Activated CD4-positive, alpha-beta T cell treated with anti-CD3 and anti-CD28 coated beads, Interleukin-2, amount 10 ng/mL, durations not matched to agents 24 days and 14 days (primary cell): ENCODE measurements at regions of chr17 and their contacts with region 1.

Region 1: DNA sequence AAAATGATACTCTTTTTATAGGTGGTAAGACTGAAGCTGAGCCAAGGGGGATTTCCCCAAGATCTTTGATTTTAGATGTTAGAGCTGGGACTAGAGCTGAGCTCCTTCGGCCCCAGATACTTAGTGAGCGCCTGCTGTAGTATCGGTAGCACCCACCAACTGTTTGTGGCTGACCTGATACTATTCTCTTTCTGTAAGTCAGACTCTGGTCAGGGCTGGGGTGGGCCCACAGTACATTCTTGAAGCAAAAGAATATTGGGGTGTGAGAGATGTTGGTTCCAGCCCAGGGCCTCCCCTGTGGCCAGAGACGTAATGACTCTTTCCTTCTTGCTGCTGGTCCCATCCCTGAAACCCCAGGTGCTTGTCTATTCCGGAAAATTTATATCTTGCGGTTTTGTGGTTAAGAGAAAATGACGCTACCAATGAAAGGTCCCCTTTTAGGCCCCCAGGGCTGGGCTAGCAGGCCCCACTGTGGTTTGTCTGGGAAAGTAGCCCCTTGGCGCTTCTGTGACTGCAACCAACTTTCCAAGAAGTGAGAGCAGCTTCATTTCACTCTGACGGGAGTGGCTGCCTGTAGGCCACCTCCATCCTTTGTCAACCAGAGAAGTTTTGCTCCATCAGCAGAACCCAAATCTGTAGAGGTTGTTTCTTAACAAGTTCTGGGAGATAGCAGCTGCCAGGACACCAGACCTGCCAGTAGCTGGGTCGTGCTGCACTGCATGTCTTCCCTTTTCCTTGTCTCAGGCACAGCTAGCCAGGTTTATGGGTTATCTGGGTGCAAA is 86.4 kb upstream of the LGALS9 start:
- DNase-seq: peak; percentile 91
- H3K4me3 Mint-ChIP-seq: peak overlapping the region; percentile 58
- H3K27ac Mint-ChIP-seq: peak overlapping the region; percentile 87
- H3K4me1 Mint-ChIP-seq: peaks cover 77% of the 10 kb centered on the region
- H3K27me3 Mint-ChIP-seq: peaks cover 3% of the 10 kb centered on the region

Region 2: GRCh38 chr17:27455914-27456680 is 88.4 kb before region 1 on chr17 and contains the start of gene KSR1:
- intact Hi-C with region 1: loop called (anchors 1 kb)
- DNase-seq: peak; percentile 95
- H3K4me3 Mint-ChIP-seq: peak within 1 kb of the TSS; percentile 98
- H3K27ac Mint-ChIP-seq: peak within 1 kb of the TSS; percentile 77
- H3K4me1 Mint-ChIP-seq: peaks cover 42% of the 10 kb centered on the region
- H3K27me3 Mint-ChIP-seq: no peaks in the 10 kb centered on the region
- total RNA-seq, gene KSR1: 104 TPM in 2 replicates

Region 3: GRCh38 chr17:27466743-27467375 is 77.7 kb before region 1 on chr17:
- intact Hi-C with region 1: loop called (anchors 1 kb)
- DNase-seq: peak; percentile 93
- H3K4me3 Mint-ChIP-seq: peak overlapping the region; percentile 83
- H3K27ac Mint-ChIP-seq: peak overlapping the region; percentile 97
- H3K4me1 Mint-ChIP-seq: peaks cover 82% of the 10 kb centered on the region
- H3K27me3 Mint-ChIP-seq: no peaks in the 10 kb centered on the region

Region 4: DNA sequence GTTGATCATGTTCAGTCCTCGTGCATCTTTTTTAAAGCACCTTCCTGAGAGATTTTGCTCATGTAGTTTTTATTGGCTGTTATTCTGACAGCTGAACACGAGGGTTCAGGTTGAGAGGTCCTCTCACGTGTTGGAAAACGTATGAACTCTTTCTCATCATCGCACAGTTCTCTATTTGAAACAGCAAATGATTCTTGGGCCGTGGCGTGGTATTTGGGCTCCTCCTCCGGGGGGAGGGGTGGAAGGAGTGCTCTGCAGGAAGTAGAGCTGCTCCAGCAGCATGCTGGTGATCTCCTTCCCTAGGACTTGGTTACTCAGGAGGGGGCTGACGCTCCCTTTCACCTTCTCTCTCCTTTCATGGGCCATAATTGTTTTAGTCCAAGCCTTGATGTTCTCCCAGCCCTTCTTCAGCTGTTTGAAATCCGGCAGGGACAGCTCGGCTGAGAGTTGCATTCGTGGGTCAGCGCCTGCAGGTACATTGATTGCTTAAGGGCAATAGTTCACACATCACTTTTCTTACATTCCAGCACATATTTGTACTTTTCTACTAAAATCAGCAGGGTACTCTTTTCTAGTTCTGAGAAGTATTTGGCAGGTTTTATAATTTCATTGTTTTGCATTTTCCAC is 17.8 kb before region 1 on chr17:
- intact Hi-C with region 1: loop called (anchors 1 kb)
- DNase-seq: peak; percentile 88
- H3K4me3 Mint-ChIP-seq: peak overlapping the region; percentile 76
- H3K27ac Mint-ChIP-seq: peak overlapping the region; percentile 89
- H3K4me1 Mint-ChIP-seq: peaks cover 82% of the 10 kb centered on the region
- H3K27me3 Mint-ChIP-seq: no peaks in the 10 kb centered on the region

Region 5: GRCh38 chr17:27569257-27569722 is 24.7 kb after region 1 on chr17:
- intact Hi-C with region 1: loop called (anchors 1 kb)
- DNase-seq: peak; percentile 81
- H3K4me3 Mint-ChIP-seq: no peak overlapping the region
- H3K27ac Mint-ChIP-seq: peak overlapping the region; percentile 48
- H3K4me1 Mint-ChIP-seq: peaks cover 69% of the 10 kb centered on the region
- H3K27me3 Mint-ChIP-seq: no peaks in the 10 kb centered on the region

Region 6: DNA sequence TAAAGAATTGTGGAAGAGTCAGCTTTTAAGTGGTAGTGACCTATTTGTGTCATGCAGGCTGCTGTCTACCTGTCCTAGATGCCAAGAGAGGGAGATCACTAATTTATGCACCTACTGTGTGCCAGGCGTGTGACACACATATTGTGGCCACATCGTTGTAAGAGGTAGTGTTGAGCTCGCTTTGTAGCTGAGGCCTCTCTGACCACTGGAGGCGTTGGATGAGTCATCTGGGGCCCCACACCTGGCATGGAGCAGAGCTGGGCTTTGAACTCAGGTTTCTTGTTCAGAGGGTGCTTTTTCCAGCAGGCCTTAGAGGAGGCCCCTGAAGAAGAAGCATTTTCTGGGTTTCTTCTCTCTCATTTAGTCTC is 34.2 kb after region 1 on chr17:
- intact Hi-C with region 1: loop called (anchors 1 kb)
- DNase-seq: peak; percentile 86
- H3K4me3 Mint-ChIP-seq: peak overlapping the region; percentile 40
- H3K27ac Mint-ChIP-seq: peak overlapping the region; percentile 86
- H3K4me1 Mint-ChIP-seq: peaks cover 72% of the 10 kb centered on the region
- H3K27me3 Mint-ChIP-seq: no peaks in the 10 kb centered on the region

Region 7: GRCh38 chr17:27701963-27702362 is 157.4 kb after region 1 on chr17:
- intact Hi-C with region 1: no loop called
- DNase-seq: no peak
- H3K4me3 Mint-ChIP-seq: no peak overlapping the region
- H3K27ac Mint-ChIP-seq: no peak overlapping the region
- H3K4me1 Mint-ChIP-seq: no peaks in the 10 kb centered on the region
- H3K27me3 Mint-ChIP-seq: peaks cover 6% of the 10 kb centered on the region